Activated T-helper 2 cell treated with anti-CD3 and anti-CD28 coated beads, Interferon-gamma antibody, Interleukin-2, Interleukin-4, amounts not matched to agents 10 μg/mL and 5 μg/mL and 100 μg/mL, durations not matched to agents 14 hours and 24 hours and 36 hours (primary cell): ENCODE measurements at regions of chr19 and their contacts with region 1.

Region 1: DNA sequence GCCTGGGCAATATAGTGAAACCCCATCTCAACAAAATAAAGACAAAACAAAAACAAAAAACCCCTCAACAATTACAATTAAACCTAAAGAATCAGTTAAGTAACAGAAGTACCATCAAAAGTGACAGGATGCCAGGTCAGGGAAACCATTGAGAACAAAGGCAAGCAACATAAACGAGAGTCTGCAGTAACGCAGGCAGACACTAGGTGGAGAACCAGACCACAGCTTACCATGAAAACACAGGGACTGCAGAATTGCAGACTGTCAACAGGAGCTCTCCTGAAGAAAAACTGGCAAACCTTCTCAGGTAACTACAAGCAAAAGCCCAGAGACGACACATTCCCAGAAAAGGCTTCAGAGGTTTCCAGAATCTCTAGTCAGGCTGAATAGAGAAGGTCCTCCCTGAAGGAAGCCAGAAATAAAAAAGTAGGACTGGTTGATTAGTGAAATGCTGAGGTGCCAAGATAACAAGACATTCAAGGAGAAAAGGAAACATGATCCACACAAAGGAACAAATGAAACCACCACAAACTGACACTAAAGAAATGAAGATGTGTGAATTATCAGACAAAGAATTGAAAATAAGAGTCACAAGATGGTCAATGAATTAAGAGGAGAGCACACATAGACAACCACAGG is 2.2 kb upstream of the ZNF665 start:
- DNase-seq: peak; percentile 66
- H3K4me3 Mint-ChIP-seq: peak overlapping the region; percentile 28
- H3K27ac Mint-ChIP-seq: no peak overlapping the region
- H3K4me1 Mint-ChIP-seq: peaks cover 24% of the 10 kb centered on the region
- H3K27me3 Mint-ChIP-seq: no peaks in the 10 kb centered on the region

Region 2: DNA sequence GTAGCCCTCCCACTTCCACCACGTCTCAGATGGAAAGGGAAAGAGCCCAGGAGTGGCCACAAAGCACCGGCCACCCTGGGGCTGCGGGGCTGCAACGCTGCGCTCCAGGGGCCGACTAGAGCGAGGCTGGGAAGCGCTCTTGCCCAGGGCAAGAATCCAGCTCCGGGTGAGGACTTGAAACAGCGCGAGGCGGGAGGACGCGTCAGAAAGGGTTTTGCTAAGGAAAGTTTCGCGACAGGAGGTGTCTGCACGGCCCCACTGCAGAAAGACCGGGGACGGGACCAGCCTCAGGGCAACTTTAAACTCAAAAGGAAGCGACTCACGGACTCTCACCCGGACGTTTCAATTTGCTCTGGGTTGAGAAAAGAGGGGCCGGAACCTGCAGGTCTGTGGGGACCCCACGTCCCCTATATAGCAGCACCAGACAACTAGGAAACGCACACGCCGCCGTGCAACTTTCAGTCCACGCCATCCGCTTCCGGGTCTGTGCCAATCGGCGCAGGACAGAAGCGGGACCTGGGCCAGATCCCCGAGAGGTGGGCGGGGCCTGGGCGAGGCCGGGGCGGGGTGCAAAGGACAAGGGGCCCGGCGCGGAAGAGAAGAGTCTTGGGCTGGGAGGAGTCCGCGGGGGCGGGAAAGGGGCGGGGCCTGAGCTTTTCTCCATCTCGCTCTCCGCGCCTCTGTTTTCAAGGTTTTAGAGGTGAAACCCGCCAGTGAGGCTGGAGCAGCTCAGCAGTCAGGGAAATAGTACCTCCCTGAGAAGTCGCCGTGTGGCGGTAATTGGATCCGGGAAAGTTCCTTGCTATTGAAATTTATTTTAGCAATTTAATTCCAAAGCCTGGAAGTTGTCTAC is 232.8 kb before region 1 on chr19 and contains the start of gene ZNF816:
- intact Hi-C with region 1: loop called (anchors 1 kb)
- DNase-seq: peak; percentile 98
- H3K4me3 Mint-ChIP-seq: peak within 1 kb of the TSS; percentile 97
- H3K27ac Mint-ChIP-seq: peak within 1 kb of the TSS; percentile 92
- H3K4me1 Mint-ChIP-seq: peaks cover 14% of the 10 kb centered on the region
- H3K27me3 Mint-ChIP-seq: no peaks in the 10 kb centered on the region
- total RNA-seq, gene ZNF816: 8.1 and 8.4 TPM in 2 replicates

Region 3: DNA sequence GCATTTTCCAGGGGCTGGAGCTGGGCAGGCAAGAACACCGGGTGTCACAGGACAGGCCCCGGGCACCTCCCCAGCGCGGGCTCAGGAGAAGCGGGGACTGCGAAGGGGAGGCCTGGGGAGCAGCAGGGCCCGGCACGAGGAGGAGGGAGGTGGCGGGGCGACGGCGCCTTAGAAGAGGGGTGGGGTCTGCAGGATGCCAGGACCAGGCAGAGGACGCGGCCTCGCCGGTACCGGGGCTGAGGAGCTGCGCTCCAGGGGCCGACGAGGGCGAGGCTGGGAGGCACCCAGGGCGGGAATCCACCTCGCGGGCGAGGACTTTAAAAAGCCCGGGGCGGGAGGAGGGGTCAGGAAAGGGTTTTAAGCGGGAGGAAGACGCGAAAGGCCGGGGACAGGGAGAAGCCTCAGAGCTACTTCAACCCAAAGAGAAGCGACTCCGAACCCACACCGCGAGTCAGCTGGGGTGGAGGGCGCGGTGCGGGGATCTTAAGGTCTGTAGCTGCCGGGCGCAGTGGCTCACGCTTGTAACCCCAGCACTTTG is 37.2 kb before region 1 on chr19:
- intact Hi-C with region 1: loop called (anchors 1 kb)
- DNase-seq: peak; percentile 9
- H3K4me3 Mint-ChIP-seq: peak overlapping the region; percentile 81
- H3K27ac Mint-ChIP-seq: peak overlapping the region; percentile 46
- H3K4me1 Mint-ChIP-seq: peaks cover 10% of the 10 kb centered on the region
- H3K27me3 Mint-ChIP-seq: no peaks in the 10 kb centered on the region

Region 4: GRCh38 chr19:53365134-53365898 is 169.9 kb after region 1 on chr19 and contains the start of gene ZNF525:
- intact Hi-C with region 1: loop called (anchors 5 kb)
- DNase-seq: peak; percentile 91
- H3K4me3 Mint-ChIP-seq: peak within 1 kb of the TSS; percentile 88
- H3K27ac Mint-ChIP-seq: peak within 1 kb of the TSS; percentile 87
- H3K4me1 Mint-ChIP-seq: peaks cover 8% of the 10 kb centered on the region
- H3K27me3 Mint-ChIP-seq: no peaks in the 10 kb centered on the region
- total RNA-seq, gene ZNF525: 14.2 and 15.0 TPM in 2 replicates

Region 5: DNA sequence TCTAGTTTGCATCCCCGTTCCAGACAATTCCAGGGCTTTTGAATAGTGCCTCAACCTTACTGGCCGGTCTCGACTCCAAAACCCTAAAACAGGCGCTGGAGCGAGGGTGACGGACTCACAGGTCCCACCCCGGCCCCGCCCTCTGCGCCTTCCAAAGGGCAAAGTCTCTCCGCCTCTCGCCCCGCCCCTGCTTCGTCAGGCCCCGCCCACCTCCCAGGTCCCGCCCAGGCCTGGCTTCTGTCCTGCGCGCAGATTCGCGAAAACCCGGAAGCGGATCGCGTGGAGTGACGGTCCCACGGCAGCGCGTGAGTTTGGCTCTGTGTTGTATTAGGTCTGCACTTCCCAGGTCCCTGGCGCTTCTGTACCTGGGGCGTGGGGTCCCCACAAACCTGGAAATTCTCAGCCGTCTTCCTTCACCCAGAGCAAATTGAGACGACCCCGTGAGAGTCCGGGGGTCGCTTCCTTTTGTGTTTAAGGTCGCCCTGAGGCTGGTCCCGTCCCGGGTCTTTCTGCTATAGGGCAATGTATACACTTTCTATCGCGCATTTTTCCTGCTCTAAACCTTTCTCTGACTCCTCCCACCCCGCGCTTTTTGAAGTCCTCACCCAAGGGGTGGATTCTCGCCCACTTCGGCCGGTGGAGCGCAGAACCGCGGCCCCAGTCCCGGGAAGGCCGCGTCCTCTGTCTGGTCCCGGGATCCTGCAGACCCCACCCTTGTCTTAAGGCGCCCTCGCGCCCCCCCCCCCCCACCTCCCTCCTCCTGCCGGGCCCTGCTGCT is 272.3 kb after region 1 on chr19 and contains the start of gene ZNF813:
- intact Hi-C with region 1: loop called (anchors 10 kb)
- DNase-seq: peak; percentile 87
- H3K4me3 Mint-ChIP-seq: peak within 1 kb of the TSS; percentile 85
- H3K27ac Mint-ChIP-seq: peak within 1 kb of the TSS; percentile 76
- H3K4me1 Mint-ChIP-seq: peaks cover 12% of the 10 kb centered on the region
- H3K27me3 Mint-ChIP-seq: no peaks in the 10 kb centered on the region
- total RNA-seq, gene ZNF813: 3.4 TPM in 2 replicates

Region 6: GRCh38 chr19:54029930-54030490 is 834.6 kb after region 1 on chr19:
- intact Hi-C with region 1: loop called (anchors 10 kb)
- DNase-seq: peak; percentile 31
- H3K4me3 Mint-ChIP-seq: no peak overlapping the region
- H3K27ac Mint-ChIP-seq: no peak overlapping the region
- H3K4me1 Mint-ChIP-seq: peaks cover 2% of the 10 kb centered on the region
- H3K27me3 Mint-ChIP-seq: peaks cover 4% of the 10 kb centered on the region